RWPE1 (cell line): ENCODE measurements at regions of chr1 and their contacts with region 1.

Region 1: DNA sequence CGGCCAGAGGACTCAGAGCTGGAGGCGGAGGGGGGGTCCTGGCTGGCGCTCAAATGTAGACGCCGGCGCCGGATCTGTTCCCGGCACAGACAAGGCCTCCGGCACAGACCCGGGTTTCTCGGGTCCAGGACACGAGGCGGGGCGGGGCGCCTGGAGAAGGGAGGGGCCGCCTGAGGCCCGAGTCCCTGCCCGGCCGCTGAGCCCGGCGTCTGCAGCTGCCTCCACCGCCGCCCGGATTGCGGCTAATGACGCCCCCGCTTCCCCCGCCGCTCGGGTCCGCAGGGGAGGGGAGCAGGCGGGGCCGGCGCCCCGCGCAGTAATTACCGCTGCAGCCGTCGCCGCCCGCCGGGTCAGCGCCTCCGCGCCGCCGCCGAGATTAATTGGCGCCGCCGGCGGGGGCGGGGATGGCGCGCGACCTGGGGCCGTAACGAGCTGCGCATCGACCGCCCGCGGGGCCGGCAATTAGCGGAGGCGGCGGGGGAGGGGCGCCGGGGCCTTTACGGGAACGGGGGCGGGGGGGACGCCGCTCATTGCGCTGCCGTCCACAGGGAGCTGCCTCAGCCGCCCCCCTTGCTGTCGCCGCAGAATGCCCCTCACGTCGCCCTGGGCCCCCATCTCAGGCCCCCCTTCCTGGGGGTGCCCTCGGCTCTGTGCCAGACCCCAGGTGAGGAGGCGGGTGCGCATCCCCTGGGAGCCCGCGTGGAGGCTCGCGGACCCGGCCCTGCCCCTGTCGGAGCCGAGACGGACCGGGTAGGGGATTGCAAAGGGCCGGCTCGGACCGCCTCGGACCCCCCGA is 17.3 kb downstream of the NOC2L start:
- DNase-seq: peak; percentile 68
- H3K27ac ChIP-seq: no peak overlapping the region
- CTCF ChIP-seq: no peak

Region 2: GRCh38 chr1:904310-904950 is 37.4 kb before region 1 on chr1:
- CTCF ChIA-PET with region 1: interaction called, 53 read pairs
- POLR2A ChIA-PET with region 1: interaction called, 3 read pairs
- DNase-seq: peak; percentile 44
- H3K27ac ChIP-seq: no peak overlapping the region
- CTCF ChIP-seq: peak; percentile 91

Region 3: GRCh38 chr1:912740-913301 is 29.0 kb before region 1 on chr1:
- CTCF ChIA-PET with region 1: interaction called, 18 read pairs
- POLR2A ChIA-PET with region 1: interaction called, 4 read pairs
- DNase-seq: no peak
- H3K27ac ChIP-seq: no peak overlapping the region
- CTCF ChIP-seq: no peak

Region 4: DNA sequence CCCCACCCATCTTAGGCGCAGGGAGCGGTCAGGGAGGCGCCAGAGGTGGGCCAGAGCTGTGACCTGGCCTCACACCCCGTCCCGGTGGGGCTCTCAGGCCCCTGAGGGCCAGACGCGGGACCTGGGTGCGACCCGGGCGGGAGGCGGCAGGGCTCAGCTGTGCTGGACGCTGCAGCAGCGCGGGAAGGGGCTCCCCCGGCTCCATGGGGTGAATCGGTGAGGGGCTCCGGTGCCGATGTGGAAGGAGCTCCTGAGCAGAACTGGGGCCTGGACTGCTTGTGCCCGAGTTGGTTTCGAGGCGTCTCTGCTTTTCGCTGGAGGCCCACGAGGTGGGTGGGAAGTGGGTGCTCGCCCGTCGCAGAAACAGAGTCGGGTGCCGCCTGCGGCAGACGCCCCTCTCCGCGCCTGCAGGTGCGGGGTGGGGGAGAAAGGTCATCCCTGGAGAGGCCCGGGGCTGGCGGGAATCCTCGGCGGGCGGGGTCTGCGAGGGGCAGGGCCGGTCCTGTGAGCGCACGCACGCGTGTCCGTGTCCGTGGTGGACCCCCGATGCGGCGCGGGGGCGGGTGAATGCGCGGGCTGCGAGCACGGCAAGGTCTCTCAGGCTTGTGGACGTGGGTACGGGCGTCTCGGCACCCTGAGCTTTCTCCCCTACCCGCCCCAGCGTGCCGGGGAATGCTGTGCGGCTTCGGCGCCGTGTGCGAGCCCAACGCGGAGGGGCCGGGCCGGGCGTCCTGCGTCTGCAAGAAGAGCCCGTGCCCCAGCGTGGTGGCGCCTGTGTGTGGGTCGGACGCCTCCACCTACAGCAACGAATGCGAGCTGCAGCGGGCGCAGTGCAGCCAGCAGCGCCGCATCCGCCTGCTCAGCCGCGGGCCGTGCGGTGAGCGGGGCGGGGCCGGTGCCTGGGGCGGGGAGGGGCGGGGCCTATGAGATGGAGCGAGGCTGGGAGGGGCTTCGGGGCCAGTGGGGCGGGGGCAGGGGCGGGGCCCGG is 98.5 kb after region 1 on chr1:
- CTCF ChIA-PET with region 1: no interaction called
- POLR2A ChIA-PET with region 1: no interaction called
- DNase-seq: peak; percentile 91
- H3K27ac ChIP-seq: peak overlapping the region; percentile 81
- CTCF ChIP-seq: peak; percentile 15; the same call in 1 of the 2 replicates

Region 5: GRCh38 chr1:1136547-1137230 is 194.9 kb after region 1 on chr1:
- CTCF ChIA-PET with region 1: no interaction called
- POLR2A ChIA-PET with region 1: no interaction called
- DNase-seq: no peak
- H3K27ac ChIP-seq: no peak overlapping the region
- CTCF ChIP-seq: no peak